Activated CD4-positive, alpha-beta memory T cell treated with anti-CD3 and anti-CD28 coated beads for 36 hours (primary cell): ENCODE measurements at regions of chr1 and their contacts with region 1.

Region 1: GRCh38 chr1:40315239-40315794 is 1.8 kb downstream of the COL9A2 start:
- DNase-seq: peak; percentile 91
- H3K4me3 Mint-ChIP-seq: peak overlapping the region; percentile 85
- H3K27ac Mint-ChIP-seq: no peak overlapping the region
- H3K4me1 Mint-ChIP-seq: peaks cover 47% of the 10 kb centered on the region
- H3K27me3 Mint-ChIP-seq: peaks cover 9% of the 10 kb centered on the region

Region 2: DNA sequence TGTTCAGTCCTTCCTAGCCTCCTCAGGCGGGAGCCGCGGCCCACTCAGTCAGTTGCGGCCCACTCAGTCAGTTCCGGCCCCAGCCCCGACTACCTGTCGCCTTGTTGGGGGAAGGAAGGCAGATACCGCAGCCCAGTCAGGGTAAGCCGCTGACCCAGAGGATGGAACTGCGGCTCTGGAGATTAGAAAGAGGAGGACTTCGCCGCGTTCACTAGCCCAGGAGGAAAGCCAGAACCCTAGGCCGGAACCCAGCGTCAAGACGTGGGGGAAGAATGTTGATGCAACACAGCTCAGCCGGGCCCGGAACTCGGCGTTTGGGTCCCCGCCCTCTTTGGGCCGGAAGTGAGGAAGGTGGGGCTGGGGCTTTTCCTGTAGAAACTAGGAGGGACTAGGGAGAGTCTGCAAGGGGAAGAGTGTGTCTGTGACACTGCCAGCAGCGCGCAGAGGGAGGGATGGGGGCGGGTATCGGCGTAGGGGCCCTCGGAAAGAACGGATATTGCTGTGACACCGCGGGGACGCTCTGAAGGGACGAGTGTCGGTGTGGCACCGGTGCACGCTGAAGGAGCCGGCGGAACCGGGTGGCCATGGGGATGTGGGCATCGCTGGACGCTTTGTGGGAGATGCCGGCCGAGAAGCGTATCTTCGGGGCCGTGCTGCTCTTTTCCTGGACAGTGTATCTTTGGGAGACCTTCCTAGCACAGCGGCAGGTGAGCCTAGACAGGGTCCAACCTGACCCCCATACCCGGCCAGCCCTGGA is 57.5 kb before region 1 on chr1 and contains the start of gene ZMPSTE24:
- CTCF ChIA-PET with region 1: interaction called, 21 read pairs
- POLR2A ChIA-PET with region 1: no interaction called
- intact Hi-C with region 1: loop called (anchors 5 kb)
- DNase-seq: peak; percentile 98
- H3K4me3 Mint-ChIP-seq: peak within 1 kb of the TSS; percentile 86
- H3K27ac Mint-ChIP-seq: peak within 1 kb of the TSS; percentile 97
- H3K4me1 Mint-ChIP-seq: peaks cover 54% of the 10 kb centered on the region
- H3K27me3 Mint-ChIP-seq: no peaks in the 10 kb centered on the region
- total RNA-seq, gene ZMPSTE24: 29.5 to 30.5 TPM

Region 3: DNA sequence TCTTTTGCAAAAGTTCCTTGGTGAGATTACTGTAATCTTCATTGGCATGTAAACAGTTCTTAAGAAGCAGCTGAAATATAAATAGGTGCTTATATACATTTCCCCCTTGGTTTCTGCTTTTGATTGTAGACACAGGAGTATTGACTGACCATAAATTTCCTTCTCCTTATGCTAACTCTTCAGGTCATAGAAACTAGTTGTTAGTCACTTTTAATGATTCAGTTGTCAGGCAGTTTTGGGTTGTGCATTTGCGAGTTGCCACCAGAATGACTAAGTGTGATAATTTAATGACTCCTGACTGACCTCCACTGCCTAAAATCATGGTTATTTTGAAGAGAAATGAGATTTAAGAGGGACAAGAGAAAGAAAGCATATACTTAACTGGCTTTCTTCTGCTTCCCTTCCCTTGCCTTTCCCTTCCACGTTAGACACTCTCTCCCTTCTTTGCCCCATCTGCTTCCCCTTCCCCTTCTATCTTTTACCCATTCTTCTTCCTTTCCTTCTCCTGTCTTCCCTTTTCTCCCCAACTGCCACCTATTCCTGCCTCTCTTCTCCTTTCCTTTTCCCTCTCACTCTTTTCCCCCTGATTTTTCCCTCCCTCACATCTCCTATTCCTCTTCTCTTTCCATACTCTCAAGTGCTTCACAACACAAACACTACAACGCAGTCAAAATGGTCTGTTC is 45.0 kb before region 1 on chr1:
- CTCF ChIA-PET with region 1: interaction called, 4 read pairs
- POLR2A ChIA-PET with region 1: no interaction called
- intact Hi-C with region 1: loop called (anchors 1 kb)
- DNase-seq: peak; percentile 48
- H3K4me3 Mint-ChIP-seq: no peak overlapping the region
- H3K27ac Mint-ChIP-seq: peak overlapping the region; percentile 93
- H3K4me1 Mint-ChIP-seq: peaks cover 42% of the 10 kb centered on the region
- H3K27me3 Mint-ChIP-seq: no peaks in the 10 kb centered on the region

Region 4: GRCh38 chr1:40291293-40291692 is 24.0 kb before region 1 on chr1:
- CTCF ChIA-PET with region 1: interaction called, 16 read pairs
- POLR2A ChIA-PET with region 1: interaction called, 3 read pairs
- intact Hi-C with region 1: no loop called
- DNase-seq: no peak
- H3K4me3 Mint-ChIP-seq: no peak overlapping the region
- H3K27ac Mint-ChIP-seq: peak overlapping the region; percentile 7
- H3K4me1 Mint-ChIP-seq: peaks cover 7% of the 10 kb centered on the region
- H3K27me3 Mint-ChIP-seq: no peaks in the 10 kb centered on the region

Region 5: GRCh38 chr1:40421431-40422384 is 106.4 kb after region 1 on chr1:
- CTCF ChIA-PET with region 1: no interaction called
- POLR2A ChIA-PET with region 1: no interaction called
- intact Hi-C with region 1: no loop called
- DNase-seq: no peak
- H3K4me3 Mint-ChIP-seq: no peak overlapping the region
- H3K27ac Mint-ChIP-seq: peak overlapping the region; percentile 61
- H3K4me1 Mint-ChIP-seq: peaks cover 7% of the 10 kb centered on the region
- H3K27me3 Mint-ChIP-seq: no peaks in the 10 kb centered on the region